Mucosa of descending colon (tissue), 3 donors: ENCODE measurements at regions of chr4 and their contacts with region 1.

Region 1: GRCh38 chr4:119628308-119629141 is at the start of gene PDE5A:
- DNase-seq: peak; percentile 87 to 94 (median 91)
- ATAC-seq: peak; percentile 91
- H3K4me3 ChIP-seq: peak within 1 kb of the TSS; percentile 57
- H3K4me1 ChIP-seq: peaks cover 5% of the 10 kb centered on the region
- CTCF ChIP-seq: peak; percentile 82
- total RNA-seq, gene PDE5A: 35.4 to 131 (median 58.4) TPM

Region 2: DNA sequence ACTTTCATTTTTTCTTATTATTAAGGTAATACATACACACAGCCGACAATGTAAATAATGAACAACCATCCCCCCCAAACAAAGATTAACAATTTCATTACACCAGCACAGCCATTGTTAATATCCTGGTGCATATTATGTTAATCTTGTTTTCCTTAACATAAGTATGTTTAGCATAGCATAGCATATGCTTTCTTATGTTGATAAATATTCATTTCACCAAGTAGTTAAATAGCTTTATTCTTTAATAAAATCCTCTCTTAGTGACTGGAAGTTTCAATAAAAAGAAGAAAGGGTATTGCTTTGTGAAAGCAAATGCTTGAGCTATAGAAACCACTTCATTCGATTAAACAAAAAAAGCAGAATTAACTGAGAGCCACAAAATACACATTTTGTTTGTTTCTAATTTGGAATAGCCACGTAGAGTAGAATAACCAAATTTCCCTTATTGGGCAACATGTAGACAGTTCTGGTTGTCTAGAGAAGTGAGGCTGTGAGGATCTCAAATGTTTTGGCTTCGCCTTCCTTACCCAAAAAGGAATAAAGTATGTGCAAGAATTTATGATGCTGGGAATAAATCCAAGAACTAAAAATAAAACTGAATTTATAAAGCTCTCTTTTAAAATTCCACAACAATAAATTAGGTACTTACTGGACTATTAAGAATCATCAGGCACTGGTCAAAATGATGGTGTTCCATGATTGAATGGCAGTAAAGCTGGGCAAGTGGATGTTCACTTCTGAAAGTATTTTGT is 118.0 kb before region 1 on chr4:
- intact Hi-C with region 1: no loop called
- DNase-seq: no peak
- ATAC-seq: no peak
- H3K4me3 ChIP-seq: no peak overlapping the region
- H3K4me1 ChIP-seq: no peaks in the 10 kb centered on the region
- CTCF ChIP-seq: no peak

Region 3: DNA sequence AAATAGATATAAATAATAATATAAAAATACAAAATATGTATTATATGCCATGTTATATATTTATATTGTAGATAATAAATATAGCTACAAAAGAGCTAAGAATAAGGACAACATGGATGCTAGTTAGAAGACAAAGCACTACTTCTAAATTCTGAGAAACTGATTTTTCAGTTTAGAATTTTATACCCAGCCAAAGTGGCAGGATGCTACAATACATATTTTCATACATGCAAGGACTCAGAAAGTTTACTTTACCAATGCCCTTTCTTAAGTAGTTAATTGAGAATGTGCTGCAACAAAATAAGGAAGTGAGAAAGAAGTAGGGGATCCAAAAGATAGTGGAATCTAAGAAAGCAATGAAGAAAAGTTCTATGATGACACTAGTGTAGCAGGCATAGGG is 64.4 kb before region 1 on chr4:
- intact Hi-C with region 1: loop called (anchors 10 kb)
- DNase-seq: no peak
- ATAC-seq: no peak
- H3K4me3 ChIP-seq: no peak overlapping the region
- H3K4me1 ChIP-seq: no peaks in the 10 kb centered on the region
- CTCF ChIP-seq: no peak

Region 4: GRCh38 chr4:119785963-119786362 is 157.4 kb after region 1 on chr4:
- intact Hi-C with region 1: loop called in 1 of 2 experiments (anchors 10 kb)
- DNase-seq: peak in 1 of 3 donors; percentile 74
- ATAC-seq: no peak
- H3K4me3 ChIP-seq: no peak overlapping the region
- H3K4me1 ChIP-seq: no peaks in the 10 kb centered on the region
- CTCF ChIP-seq: no peak

Region 5: DNA sequence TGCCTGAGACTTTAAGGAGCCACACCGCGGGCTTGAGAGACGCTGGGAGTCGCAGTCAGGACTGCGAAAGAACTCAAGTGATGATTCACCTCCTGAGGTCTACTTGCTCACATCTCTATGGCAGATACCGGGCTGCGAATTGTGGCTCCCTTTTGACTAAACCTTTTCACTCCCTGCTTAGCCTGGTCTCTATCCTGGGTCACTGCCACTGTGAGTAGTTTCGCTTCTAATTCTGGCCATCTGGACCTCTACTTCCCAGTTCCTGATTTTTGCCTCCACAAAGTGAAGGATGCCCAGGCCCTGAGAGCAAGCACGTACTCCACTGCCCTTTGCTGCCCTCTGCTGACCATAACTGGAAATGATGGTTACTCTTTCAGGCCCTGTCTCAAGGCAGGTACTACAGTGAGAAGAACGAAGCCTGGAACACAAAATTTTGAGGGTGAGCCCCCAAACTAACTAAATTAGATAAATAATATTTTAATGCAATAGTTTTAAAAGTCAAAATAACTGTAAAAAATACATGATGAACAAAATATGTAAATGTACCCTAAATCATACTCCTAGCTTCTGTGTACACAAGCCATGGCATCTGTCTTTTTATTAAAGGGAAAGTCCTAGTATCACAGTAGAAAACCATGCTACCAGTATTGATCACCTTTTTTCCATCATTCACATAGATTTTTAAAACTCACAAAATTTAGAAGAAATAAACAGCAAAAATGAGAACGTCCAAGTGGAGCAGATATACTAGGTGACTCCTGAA is 421.4 kb after region 1 on chr4:
- intact Hi-C with region 1: loop called in 1 of 2 experiments (anchors 2 kb)
- DNase-seq: peak in 2 of 3 donors; percentile 49 to 95
- ATAC-seq: peak; percentile 99
- H3K4me3 ChIP-seq: no peak overlapping the region
- H3K4me1 ChIP-seq: no peaks in the 10 kb centered on the region
- CTCF ChIP-seq: peak; percentile 55